PC-9 (cell line): ENCODE measurements at regions of chr4 and their contacts with region 1.

Region 1: GRCh38 chr4:86934771-86935565 is at the start of gene AFF1:
- DNase-seq: peak; percentile 77 to 88
- H3K4me3 ChIP-seq: peak within 1 kb of the TSS; percentile 75
- H3K27ac ChIP-seq: peak within 1 kb of the TSS; percentile 83
- H3K4me1 ChIP-seq: peaks cover 36% of the 10 kb centered on the region
- H3K27me3 ChIP-seq: no peaks in the 10 kb centered on the region
- CTCF ChIP-seq: 0 out of 2 replicates have a peak, but pooled peaks have one; percentile 23
- total RNA-seq, gene AFF1: 45.3 and 52.8 TPM in 2 replicates

Region 2: DNA sequence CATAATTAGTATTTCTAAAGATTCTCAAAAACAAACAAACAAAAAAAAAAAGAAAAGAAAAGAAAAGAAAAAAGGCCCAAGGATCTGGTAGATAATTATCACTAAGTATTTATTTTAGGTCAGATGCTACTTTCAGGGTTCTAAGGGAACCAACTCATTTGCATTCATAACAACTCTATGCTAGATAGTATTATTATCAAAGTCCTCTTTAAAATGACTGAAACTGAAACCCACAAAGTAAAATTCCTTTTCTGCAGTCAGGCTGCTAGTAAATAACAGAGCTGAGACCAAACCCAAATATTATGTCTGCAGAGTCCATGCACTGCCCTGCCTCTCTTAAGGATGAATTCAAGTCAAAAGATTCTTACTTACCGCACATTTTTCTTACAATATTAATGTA is 536.8 kb before region 1 on chr4:
- CTCF ChIA-PET with region 1: no interaction called
- POLR2A ChIA-PET with region 1: no interaction called
- intact Hi-C with region 1: no loop called
- DNase-seq: no peak
- H3K4me3 ChIP-seq: no peak overlapping the region
- H3K27ac ChIP-seq: no peak overlapping the region
- H3K4me1 ChIP-seq: no peaks in the 10 kb centered on the region
- H3K27me3 ChIP-seq: no peaks in the 10 kb centered on the region
- CTCF ChIP-seq: no peak

Region 3: GRCh38 chr4:86878640-86879039 is 56.3 kb before region 1 on chr4:
- CTCF ChIA-PET with region 1: no interaction called
- POLR2A ChIA-PET with region 1: no interaction called
- intact Hi-C with region 1: no loop called
- DNase-seq: no peak
- H3K4me3 ChIP-seq: no peak overlapping the region
- H3K27ac ChIP-seq: no peak overlapping the region
- H3K4me1 ChIP-seq: no peaks in the 10 kb centered on the region
- H3K27me3 ChIP-seq: no peaks in the 10 kb centered on the region
- CTCF ChIP-seq: no peak

Region 4: DNA sequence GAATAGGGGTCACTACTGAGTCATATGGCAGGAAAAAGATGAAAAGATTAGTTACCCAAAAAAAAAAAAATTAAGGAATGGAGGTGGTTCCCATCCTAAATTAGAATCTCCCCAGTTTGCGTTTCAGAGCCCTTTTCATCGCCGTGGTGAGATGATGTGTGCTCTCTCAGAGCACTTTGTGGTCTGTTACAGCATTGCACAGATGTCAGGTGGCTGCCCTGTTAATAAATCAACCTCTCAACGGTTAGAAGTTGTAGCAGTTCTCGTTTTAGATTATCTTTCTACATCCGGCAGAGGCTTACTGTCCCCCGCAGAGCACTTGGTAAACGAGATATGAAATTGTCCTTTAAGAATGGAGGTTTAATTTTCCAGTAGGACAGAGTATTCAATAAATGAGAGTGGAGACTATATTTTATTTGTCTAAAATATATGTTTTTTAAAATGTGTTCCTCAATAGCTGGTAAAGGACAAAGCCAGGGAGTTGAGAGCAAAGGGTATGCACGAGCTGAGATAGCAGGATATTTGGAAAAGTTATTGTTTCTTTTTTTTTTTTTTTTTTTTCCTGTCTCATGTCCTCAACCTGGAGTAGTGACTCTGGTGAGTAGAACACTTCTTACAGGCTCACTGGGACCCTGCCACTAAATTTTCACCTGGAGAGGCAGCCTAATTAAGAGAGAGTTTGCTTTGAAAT is 26.8 kb after region 1 on chr4:
- CTCF ChIA-PET with region 1: no interaction called
- POLR2A ChIA-PET with region 1: interaction called, 3 read pairs
- intact Hi-C with region 1: loop called (anchors 2 kb)
- DNase-seq: no peak
- H3K4me3 ChIP-seq: no peak overlapping the region
- H3K27ac ChIP-seq: no peak overlapping the region
- H3K4me1 ChIP-seq: peaks cover 15% of the 10 kb centered on the region
- H3K27me3 ChIP-seq: no peaks in the 10 kb centered on the region
- CTCF ChIP-seq: no peak

Region 5: GRCh38 chr4:86972997-86973396 is 38.0 kb after region 1 on chr4:
- CTCF ChIA-PET with region 1: no interaction called
- POLR2A ChIA-PET with region 1: interaction called, 11 read pairs
- intact Hi-C with region 1: loop called (anchors 5 kb)
- DNase-seq: peak; percentile 66 to 69
- H3K4me3 ChIP-seq: no peak overlapping the region
- H3K27ac ChIP-seq: peak overlapping the region; percentile 43
- H3K4me1 ChIP-seq: peaks cover 29% of the 10 kb centered on the region
- H3K27me3 ChIP-seq: no peaks in the 10 kb centered on the region
- CTCF ChIP-seq: no peak

Region 6: DNA sequence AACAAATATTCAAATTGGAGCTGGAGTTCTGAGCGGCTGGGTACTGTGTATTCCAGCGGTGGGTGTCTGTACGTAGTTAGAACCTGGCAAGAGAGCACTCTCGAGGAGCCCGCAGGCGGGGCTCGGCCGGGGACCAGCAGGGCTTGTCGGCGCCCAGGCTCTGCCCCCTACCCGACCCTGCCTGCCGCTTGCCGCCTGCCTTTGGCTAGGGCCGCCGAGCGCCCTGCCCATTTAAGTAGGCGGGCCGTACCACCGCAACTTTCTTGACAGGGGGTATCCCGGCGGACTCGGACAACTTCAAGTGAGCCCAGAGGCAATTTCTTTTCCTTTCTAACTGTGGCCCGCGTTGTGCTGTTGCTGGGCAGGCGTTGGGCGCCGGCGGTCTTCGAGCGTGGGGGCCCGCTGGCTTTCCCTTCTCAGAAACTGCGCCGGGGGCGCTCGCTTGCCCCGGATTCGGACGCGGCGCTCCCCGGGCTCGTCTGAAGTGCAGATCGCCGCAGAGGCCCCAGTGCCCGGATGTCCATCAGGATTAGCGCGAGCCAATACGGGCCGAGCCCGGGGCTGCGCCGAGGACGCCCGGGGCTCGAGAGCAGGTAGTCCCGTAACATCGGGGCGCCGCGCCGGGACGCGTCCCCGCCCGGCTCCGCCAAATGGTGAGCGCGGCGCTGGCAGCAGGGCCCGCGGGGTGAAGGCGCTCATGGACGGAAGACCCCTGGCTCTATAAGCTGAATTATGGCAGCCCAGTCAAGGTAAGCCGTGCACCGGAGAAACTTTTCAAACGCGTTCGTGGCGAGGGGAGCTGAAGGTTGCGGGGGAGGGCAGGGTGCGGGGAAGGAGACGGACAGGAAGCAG is 71.9 kb after region 1 on chr4:
- CTCF ChIA-PET with region 1: interaction called, 9 read pairs
- POLR2A ChIA-PET with region 1: interaction called, 7 read pairs
- intact Hi-C with region 1: loop called (anchors 1 kb)
- DNase-seq: peak; percentile 72 to 87
- H3K4me3 ChIP-seq: peak overlapping the region; percentile 93
- H3K27ac ChIP-seq: peak overlapping the region; percentile 85
- H3K4me1 ChIP-seq: peaks cover 45% of the 10 kb centered on the region
- H3K27me3 ChIP-seq: no peaks in the 10 kb centered on the region
- CTCF ChIP-seq: no peak; the same call in 1 of the 2 replicates

Region 7: DNA sequence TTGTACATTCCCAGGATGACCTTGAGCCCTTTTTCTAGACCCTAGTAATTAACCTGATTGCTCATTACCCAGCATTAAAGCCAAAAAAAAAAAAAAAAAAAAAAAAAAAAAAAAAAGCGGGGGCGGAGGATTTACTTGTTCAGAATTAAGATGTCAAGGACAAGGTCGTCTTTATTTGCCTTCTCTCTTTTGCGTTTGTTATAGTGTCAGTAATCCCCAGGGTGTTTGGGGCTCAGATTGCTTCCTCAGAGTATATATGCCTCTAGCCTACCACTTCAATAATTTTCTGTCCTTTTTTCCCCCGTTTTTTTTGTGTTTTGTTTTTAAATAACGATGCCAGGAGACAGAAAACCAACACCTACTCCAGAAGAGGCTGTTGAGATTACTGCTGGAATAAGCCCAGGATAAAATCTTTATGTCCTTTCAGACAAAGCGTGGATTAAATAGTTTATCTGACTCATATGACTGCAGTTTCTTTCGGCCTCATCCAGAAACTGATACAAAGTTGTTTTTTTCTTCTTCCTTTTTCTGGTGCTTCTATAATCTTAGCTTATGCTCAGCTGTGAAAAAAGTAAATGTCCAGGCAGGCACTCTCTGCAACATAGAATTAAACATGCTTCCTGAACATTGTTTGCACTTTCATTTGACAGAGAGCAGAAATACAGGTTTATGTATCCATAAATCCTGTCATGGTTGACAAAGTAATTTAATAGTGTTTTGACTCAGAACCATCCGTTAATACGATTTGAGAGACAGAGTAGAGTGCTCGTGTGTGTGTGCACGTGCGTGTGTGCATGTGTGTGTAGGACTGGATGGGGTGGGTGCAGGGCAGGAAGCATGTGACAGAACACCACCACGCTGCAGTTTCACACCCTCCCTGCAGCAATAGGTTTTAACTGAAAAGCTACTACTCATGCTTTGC is 138.5 kb after region 1 on chr4:
- CTCF ChIA-PET with region 1: no interaction called
- POLR2A ChIA-PET with region 1: no interaction called
- intact Hi-C with region 1: no loop called
- DNase-seq: no peak
- H3K4me3 ChIP-seq: no peak overlapping the region
- H3K27ac ChIP-seq: no peak overlapping the region
- H3K4me1 ChIP-seq: no peaks in the 10 kb centered on the region
- H3K27me3 ChIP-seq: no peaks in the 10 kb centered on the region
- CTCF ChIP-seq: no peak

Region 8: GRCh38 chr4:87087420-87087819 is 152.5 kb after region 1 on chr4:
- CTCF ChIA-PET with region 1: interaction called, 4 read pairs
- POLR2A ChIA-PET with region 1: interaction called, 11 read pairs
- intact Hi-C with region 1: no loop called
- DNase-seq: no peak
- H3K4me3 ChIP-seq: no peak overlapping the region
- H3K27ac ChIP-seq: no peak overlapping the region
- H3K4me1 ChIP-seq: peaks cover 16% of the 10 kb centered on the region
- H3K27me3 ChIP-seq: no peaks in the 10 kb centered on the region
- CTCF ChIP-seq: no peak

Region 9: DNA sequence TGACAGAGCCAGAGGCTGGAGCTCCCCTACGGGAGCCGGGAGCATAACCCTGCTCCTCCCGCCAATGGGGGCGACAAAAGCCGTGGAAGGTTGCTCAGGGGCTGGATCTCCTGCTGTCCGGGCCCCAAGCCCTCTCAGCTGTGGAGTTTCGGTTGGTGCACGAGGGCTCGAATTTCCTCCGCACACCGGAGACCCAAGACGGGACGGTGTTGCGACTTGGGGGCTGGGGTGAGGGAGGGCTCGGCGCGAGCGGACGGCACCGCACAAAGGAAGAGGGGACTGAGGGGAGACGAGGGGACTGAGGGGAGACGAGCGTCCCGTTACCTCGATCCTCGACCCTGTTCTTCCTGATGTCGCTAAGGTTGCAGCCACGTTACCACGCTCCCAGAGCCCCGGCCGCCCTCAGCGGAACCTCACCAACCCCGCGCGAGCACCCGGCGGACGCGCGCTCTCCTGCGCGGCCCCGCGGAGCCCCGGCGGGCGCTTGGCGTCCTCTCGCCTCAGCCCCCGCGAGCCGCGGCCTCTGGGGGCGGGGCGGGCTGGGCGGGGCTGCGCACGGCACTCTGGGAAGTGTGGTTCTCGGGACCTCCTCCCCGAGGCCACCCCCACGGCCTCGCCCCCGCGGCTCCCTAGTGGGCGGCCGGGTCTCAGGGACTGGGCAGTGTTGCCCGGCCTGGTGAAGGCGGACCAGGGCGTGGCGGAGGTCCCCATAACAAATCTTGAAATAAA is 285.3 kb after region 1 on chr4 and contains the start of gene KLHL8:
- CTCF ChIA-PET with region 1: interaction called, 4 read pairs
- POLR2A ChIA-PET with region 1: no interaction called
- intact Hi-C with region 1: loop called (anchors 5 kb)
- DNase-seq: peak; percentile 79 to 92
- H3K4me3 ChIP-seq: peak within 1 kb of the TSS; percentile 93
- H3K27ac ChIP-seq: peak within 1 kb of the TSS; percentile 78
- H3K4me1 ChIP-seq: peaks cover 7% of the 10 kb centered on the region
- H3K27me3 ChIP-seq: no peaks in the 10 kb centered on the region
- CTCF ChIP-seq: no peak
- total RNA-seq, gene KLHL8: 8.5 and 10.4 TPM in 2 replicates

Region 10: DNA sequence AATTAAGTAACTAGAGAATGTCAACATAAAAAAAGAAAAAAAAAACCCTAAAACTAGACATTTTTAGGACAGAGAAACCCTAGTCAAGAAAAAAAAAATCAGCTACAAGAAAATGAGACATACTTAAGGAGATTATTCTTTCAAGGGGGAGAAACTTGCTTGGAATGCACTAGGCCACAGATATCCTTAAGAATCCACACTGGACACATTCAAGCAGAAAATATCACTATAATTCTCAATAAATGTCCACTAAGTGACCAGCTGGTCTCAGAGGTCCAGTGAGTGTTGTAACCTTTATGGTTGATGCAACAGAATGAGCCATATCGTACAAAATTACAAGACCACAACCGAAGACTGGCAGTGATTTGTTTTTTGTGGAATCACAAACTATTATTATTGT is 848.8 kb after region 1 on chr4:
- CTCF ChIA-PET with region 1: no interaction called
- POLR2A ChIA-PET with region 1: no interaction called
- intact Hi-C with region 1: no loop called
- DNase-seq: no peak
- H3K4me3 ChIP-seq: no peak overlapping the region
- H3K27ac ChIP-seq: no peak overlapping the region
- H3K4me1 ChIP-seq: no peaks in the 10 kb centered on the region
- H3K27me3 ChIP-seq: no peaks in the 10 kb centered on the region
- CTCF ChIP-seq: no peak